ENCODE measurements at regions of chr1 and their contacts with region 1.

Region 1: GRCh38 chr1:234610348-234611152 is 572 bp upstream of the IRF2BP2 start:
- DNase-seq: no peak
- H3K4me3 ChIP-seq: peak overlapping the region; percentile 63
- CTCF ChIP-seq: peak; percentile 19

Region 2: GRCh38 chr1:234564642-234565037 is 45.9 kb before region 1 on chr1:
- CTCF ChIA-PET with region 1: no interaction called
- POLR2A ChIA-PET with region 1: no interaction called
- DNase-seq: peak; percentile 40
- H3K4me3 ChIP-seq: no peak overlapping the region
- CTCF ChIP-seq: no peak

Region 3: DNA sequence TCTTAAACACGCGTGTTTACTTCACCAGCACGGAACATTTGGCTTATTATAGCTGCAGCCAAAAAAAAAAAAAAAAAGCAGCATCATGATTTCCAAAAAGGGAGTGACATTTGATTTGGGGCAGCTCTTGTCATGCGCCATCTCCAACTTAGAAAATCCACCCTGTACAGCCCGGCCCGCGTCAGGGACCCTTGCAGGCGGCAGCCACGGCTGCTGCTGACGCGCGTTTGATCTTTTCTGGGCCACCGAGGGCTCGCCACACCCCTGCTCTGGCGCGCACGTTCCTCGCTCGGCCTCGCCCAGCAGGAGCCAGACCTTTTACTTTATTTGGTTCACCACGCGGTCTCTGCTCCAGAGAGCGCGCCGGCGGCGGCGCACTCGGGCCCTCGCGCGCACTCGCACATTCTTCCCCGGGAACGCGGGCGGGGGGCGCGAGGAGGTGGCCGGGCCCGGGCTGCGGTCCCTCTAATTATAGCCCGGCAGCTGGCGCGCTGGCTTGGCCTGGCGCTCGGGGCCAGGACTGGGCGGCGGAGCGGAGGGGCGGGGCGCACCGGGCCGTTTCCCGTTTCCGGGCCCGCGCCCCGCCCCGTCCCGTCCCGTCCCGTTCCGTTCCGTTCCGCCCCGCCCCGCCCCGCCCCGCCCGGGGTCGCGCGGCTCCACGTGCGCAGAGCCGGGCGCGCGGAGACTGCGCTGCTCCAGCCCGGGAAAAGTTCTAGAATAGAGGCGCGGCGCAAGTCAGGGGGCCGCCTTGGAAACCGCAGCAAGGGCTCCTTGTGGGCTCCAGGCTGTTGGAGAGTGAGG is 10.7 kb before region 1 on chr1:
- CTCF ChIA-PET with region 1: interaction called, 4 read pairs
- POLR2A ChIA-PET with region 1: interaction called, 10 read pairs
- DNase-seq: no peak
- H3K4me3 ChIP-seq: peak overlapping the region; percentile 61
- CTCF ChIP-seq: no peak

Region 4: DNA sequence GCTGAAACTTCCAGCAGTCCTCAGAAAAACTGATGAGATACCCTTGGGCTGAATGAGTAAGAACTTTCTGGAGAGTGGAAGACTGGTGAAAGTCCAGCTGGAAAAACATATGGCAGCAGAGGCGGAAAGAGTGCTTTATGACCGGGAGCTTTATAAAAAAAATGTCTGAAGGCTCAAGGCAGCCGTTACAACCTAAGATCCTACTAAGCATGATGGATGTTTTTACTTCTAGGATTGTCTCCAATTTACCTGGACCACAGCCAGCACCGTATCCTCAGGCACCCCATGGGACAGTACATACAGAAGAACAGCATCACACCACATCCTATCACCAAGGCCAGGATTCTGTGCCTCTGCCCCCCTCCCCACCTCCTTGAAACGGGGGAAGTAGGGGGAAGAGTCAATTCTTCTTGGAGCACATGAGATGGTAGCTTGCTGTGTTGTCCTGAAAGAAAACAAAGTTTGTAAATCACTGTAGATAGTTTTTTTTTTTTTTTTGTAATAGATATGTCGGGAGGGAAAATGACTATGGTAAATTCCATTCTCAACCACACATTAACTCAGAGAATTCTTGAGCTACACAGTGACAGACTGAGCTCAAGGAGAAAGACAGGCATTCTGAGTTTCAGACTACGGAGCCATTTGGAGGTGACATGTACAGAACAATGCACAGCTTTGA is 11.2 kb after region 1 on chr1:
- CTCF ChIA-PET with region 1: interaction called, 3 read pairs
- POLR2A ChIA-PET with region 1: interaction called, 17 read pairs
- DNase-seq: no peak
- H3K4me3 ChIP-seq: 0 out of 2 replicates have a peak overlapping the region, but pooled peaks have one; percentile 13
- CTCF ChIP-seq: no peak

Region 5: DNA sequence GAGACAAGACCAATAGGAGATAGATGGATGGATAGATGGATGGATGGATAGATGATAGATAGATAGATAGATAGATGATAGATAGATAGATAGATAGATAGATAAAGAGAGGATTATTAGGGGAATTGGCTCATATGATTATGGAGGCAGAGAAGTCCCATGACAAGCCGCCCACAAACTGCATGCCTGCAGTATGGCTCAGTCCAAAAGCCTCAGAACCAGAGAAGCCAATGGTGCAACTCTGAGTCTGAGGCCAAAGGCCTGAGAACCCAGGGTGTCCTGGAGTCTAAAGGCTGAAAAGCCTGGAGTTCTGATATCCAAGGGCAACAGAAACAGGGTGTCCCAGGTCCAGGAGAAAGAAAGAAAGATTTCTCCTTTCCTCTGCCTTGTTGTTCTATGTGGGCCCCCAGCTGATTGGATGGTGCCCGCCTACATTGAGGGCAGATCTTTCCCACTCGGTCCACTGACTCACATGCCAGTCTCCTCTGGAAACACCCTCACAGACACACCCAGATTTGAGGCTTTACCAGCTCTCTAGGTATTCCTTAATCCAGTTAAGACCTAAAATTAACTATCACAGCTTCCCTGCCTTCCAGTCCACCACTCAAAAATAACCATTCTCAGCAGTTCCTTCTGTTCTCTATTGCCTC is 39.0 kb after region 1 on chr1:
- CTCF ChIA-PET with region 1: no interaction called
- POLR2A ChIA-PET with region 1: no interaction called
- DNase-seq: no peak
- H3K4me3 ChIP-seq: no peak overlapping the region
- CTCF ChIP-seq: no peak

Region 6: DNA sequence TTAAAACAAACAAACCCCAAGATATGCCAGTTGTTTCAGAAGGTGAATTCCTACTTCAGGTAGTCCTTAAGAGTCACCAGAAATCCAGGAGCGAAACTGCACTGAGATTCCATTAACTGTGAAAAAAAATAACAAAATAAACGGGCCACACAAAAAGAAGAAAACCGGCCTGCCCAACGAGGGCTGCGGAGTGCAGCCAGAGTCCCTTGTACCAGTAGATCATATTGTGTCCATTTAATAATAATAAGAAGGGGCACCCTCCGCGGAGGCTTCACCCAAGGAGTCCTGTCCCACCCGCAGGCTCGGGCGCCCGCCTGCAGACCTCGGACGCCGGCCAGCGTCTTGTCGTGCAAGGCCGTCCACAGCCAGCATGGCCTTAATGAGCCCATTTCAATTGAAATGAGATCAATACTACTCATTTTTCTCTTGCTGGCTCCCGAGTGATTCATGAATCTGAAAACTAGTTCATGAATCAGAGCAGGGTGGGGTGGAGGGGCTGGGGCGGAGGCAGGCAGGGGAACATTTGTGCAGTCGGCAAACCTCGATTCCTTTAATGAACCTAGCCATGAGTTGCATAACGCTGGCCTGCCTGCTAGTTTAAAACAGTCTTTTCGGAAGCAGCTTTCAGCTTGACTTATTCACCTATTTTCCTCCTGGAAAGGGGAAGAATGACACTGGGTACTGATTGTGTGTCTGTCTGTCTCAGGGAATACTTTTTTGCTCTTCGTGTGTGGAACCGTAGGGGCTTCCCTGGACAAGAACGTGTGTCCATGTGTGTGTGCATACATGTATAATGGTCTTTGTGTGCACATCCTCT is 112.6 kb after region 1 on chr1:
- CTCF ChIA-PET with region 1: interaction called, 8 read pairs
- POLR2A ChIA-PET with region 1: interaction called, 95 read pairs
- DNase-seq: peak; percentile 69
- H3K4me3 ChIP-seq: peak overlapping the region; percentile 23
- CTCF ChIP-seq: no peak

Region 7: GRCh38 chr1:235077571-235078479 is 467.3 kb after region 1 on chr1:
- CTCF ChIA-PET with region 1: interaction called, 4 read pairs
- POLR2A ChIA-PET with region 1: interaction called, 11 read pairs
- DNase-seq: no peak
- H3K4me3 ChIP-seq: no peak overlapping the region
- CTCF ChIP-seq: no peak